Sigmoid colon (tissue), 7 donors: ENCODE measurements at regions of chr15 and their contacts with region 1.

Region 1: GRCh38 chr15:65184868-65185738 is at the start of gene CLPX:
- DNase-seq: peak; percentile 97
- H3K4me3 ChIP-seq: peak within 1 kb of the TSS; percentile 74 to 98 (median 88)
- H3K27ac ChIP-seq: peak within 1 kb of the TSS; percentile 94 to 98 (median 96)
- H3K4me1 ChIP-seq: peaks cover 0 to 46% (median 37%) of the 10 kb centered on the region in 4 donors
- H3K27me3 ChIP-seq: no peaks in the 10 kb centered on the region
- CTCF ChIP-seq: no peak
- EP300 ChIP-seq: peak in 1 of 4 donors; percentile 20
- POLR2A ChIP-seq: peak; percentile 63 to 74
- total RNA-seq, gene CLPX: 39.9 to 71.4 (median 47.1) TPM

Region 2: DNA sequence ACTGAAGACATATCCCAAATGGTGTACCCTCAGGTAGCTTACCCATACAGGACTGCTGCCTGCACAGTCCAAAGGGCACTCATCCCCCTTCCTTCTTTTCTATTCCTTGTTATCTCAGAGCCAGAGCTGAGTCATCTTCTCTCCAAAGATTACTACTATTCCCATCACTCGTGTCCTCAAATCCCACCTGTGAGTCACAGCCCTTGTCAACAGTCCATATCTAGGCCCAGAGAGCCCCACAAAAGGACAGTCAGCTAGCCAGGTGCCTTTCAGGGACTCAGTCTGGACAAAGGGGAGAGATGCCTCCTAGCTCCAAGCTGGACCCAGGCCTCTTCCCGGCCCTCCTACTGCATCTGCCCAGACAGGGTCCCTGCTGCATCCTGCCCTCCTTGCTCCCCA is 90.6 kb after region 1 on chr15:
- intact Hi-C with region 1: loop called (anchors 1 kb)
- DNase-seq: no peak
- H3K4me3 ChIP-seq: no peak overlapping the region
- H3K27ac ChIP-seq: no peak overlapping the region
- H3K4me1 ChIP-seq: peaks cover 0 to 2% (median 1%) of the 10 kb centered on the region in 4 donors
- H3K27me3 ChIP-seq: no peaks in the 10 kb centered on the region
- CTCF ChIP-seq: no peak
- EP300 ChIP-seq: no peak
- POLR2A ChIP-seq: no peak

Region 3: GRCh38 chr15:65286704-65287519 is 101.8 kb after region 1 on chr15 and contains the start of gene PARP16:
- intact Hi-C with region 1: loop called (anchors 1 kb)
- DNase-seq: peak; percentile 96
- H3K4me3 ChIP-seq: peak within 1 kb of the TSS; percentile 60 to 76 (median 70)
- H3K27ac ChIP-seq: peak within 1 kb of the TSS; percentile 85 to 92 (median 90)
- H3K4me1 ChIP-seq: peaks cover 0 to 23% (median 20%) of the 10 kb centered on the region in 4 donors
- H3K27me3 ChIP-seq: no peaks in the 10 kb centered on the region
- CTCF ChIP-seq: peak in 2 of 4 experiments; percentile 25 to 55
- EP300 ChIP-seq: no peak
- POLR2A ChIP-seq: peak; percentile 59 to 61
- total RNA-seq, gene PARP16: 4.4 to 12.5 (median 10.4) TPM

Region 4: DNA sequence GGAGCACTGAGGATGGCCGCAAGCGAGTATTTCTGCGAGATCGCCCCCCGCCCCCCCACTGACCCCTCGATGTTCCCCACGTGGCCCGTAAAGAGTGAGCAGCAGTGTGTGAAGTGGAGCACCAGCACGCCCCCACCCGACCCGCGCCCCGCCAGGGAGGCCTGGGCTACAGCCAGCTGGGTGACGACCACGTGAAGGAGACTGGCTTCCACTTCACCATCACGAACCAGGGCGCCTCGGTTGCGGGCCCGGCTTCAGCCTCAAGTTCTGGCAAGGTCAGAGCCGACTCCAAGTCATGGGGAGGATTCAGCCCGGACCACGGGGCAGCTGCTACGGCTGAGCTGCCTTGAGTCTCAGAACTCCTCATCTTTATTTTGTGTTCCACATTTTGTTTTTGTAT is 117.0 kb after region 1 on chr15:
- intact Hi-C with region 1: loop called (anchors 2 kb)
- DNase-seq: no peak
- H3K4me3 ChIP-seq: no peak overlapping the region
- H3K27ac ChIP-seq: no peak overlapping the region
- H3K4me1 ChIP-seq: peaks cover 0 to 27% (median 17%) of the 10 kb centered on the region in 4 donors
- H3K27me3 ChIP-seq: no peaks in the 10 kb centered on the region
- CTCF ChIP-seq: no peak
- EP300 ChIP-seq: no peak
- POLR2A ChIP-seq: no peak